Caco-2 (cell line): ENCODE measurements at regions of chrX and their contacts with region 1.

Region 1: GRCh38 chrX:133045986-133046385 is 50.9 kb downstream of the USP26 start:
- DNase-seq: peak in 1 of 2 experiments; percentile 28
- H3K4me3 ChIP-seq: no peak overlapping the region
- H3K4me3 Mint-ChIP-seq: no peak overlapping the region
- H3K27ac Mint-ChIP-seq: no peak overlapping the region
- H3K4me1 ChIP-seq: no peaks in the 10 kb centered on the region
- H3K4me1 Mint-ChIP-seq: no peaks in the 10 kb centered on the region
- H3K27me3 ChIP-seq: no peaks in the 10 kb centered on the region
- H3K27me3 Mint-ChIP-seq: no peaks in the 10 kb centered on the region
- CTCF ChIP-seq: peak; percentile 15 to 48

Region 2: GRCh38 chrX:133090236-133090809 is 44.3 kb after region 1 on chrX:
- CTCF ChIA-PET with region 1: no interaction called
- POLR2A ChIA-PET with region 1: no interaction called
- intact Hi-C with region 1: loop called (anchors 10 kb)
- DNase-seq: no peak
- H3K4me3 ChIP-seq: no peak overlapping the region
- H3K4me3 Mint-ChIP-seq: no peak overlapping the region
- H3K27ac Mint-ChIP-seq: no peak overlapping the region
- H3K4me1 ChIP-seq: no peaks in the 10 kb centered on the region
- H3K4me1 Mint-ChIP-seq: no peaks in the 10 kb centered on the region
- H3K27me3 ChIP-seq: no peaks in the 10 kb centered on the region
- H3K27me3 Mint-ChIP-seq: no peaks in the 10 kb centered on the region
- CTCF ChIP-seq: no peak

Region 3: DNA sequence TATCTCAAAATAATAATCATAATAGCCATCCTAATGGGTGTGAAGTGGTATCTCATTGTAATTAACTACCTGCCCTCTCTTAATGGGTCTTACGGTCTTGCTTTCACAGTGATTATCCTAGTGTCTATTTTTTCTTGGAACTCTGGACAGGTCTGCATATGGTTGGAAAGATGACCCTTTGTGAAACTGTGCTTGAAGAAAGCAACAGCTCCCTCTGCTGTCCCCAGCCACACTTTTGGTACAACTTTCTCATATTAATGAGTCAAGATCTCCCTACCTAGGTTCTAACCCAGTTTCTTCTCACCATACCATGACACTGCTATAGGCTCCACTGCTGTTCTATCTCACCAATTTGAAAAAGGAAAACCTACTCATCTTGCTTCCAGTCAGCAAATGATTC is 169.8 kb after region 1 on chrX:
- CTCF ChIA-PET with region 1: interaction called, 3 read pairs
- POLR2A ChIA-PET with region 1: no interaction called
- intact Hi-C with region 1: loop called (anchors 1 kb)
- DNase-seq: peak in 1 of 2 experiments; percentile 31
- H3K4me3 ChIP-seq: no peak overlapping the region
- H3K4me3 Mint-ChIP-seq: no peak overlapping the region
- H3K27ac Mint-ChIP-seq: no peak overlapping the region
- H3K4me1 ChIP-seq: no peaks in the 10 kb centered on the region
- H3K4me1 Mint-ChIP-seq: no peaks in the 10 kb centered on the region
- H3K27me3 ChIP-seq: no peaks in the 10 kb centered on the region
- H3K27me3 Mint-ChIP-seq: no peaks in the 10 kb centered on the region
- CTCF ChIP-seq: peak; percentile 19 to 36